ENCODE measurements at regions of chr13 and their contacts with region 1.

Region 1: GRCh38 chr13:52348983-52349780 is 56.8 kb downstream of the THSD1 start:
- DNase-seq: peak; percentile 51
- H3K4me3 ChIP-seq: no peak overlapping the region
- H3K27ac ChIP-seq: no peak overlapping the region
- H3K4me1 ChIP-seq: peaks cover 21% of the 10 kb centered on the region
- H3K27me3 ChIP-seq: no peaks in the 10 kb centered on the region
- CTCF ChIP-seq: no peak
- POLR2A ChIP-seq: no peak

Region 2: DNA sequence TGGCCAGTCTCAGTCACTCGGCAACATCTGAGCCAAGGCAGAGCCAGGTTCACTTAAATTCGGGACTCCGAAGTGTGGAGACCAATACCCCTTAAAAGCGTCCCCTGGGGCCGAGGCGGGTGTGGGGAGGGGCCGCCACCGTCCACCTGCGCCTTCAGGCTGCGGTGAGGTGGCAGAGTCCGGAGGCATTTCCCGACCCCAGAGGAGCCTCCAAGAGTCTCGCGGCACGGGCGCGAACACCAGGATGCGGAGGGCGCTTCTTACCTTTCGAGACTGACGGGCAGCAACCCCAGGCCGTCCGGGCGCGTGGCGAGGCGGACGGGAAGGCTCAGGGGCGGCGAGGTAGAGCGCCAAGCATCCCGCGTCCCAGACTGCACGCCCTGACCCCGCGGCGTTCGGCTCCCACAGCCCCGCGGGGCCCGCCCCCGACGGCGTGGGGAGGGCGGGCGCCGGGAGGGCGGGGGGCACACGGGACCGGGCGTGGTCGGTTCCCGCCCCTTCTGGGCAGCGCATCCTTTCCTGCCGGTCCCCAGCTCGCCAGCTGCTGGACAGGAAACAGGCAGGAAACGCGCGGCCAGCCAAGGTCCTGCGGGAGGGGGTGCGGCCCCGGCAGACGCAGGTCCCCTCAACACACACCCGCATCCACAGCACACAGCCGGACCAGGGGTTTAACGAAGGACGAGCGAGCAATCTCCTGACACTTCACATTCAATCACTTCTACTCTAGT is 56.7 kb after region 1 on chr13 and contains the start of gene THSD1:
- CTCF ChIA-PET with region 1: no interaction called
- POLR2A ChIA-PET with region 1: no interaction called
- dilution Hi-C with region 1: no loop called
- intact Hi-C with region 1: loop called (anchors 2 kb)
- DNase-seq: peak; percentile 71
- H3K4me3 ChIP-seq: peak within 1 kb of the TSS; percentile 71 to 99 (median 74)
- H3K27ac ChIP-seq: peak within 1 kb of the TSS; percentile 81
- H3K4me1 ChIP-seq: peaks cover 21% of the 10 kb centered on the region
- H3K27me3 ChIP-seq: no peaks in the 10 kb centered on the region
- CTCF ChIP-seq: no peak
- POLR2A ChIP-seq: peak; percentile 81
- total RNA-seq, gene THSD1: 25.2 and 25.4 TPM in 2 replicates

Measured in endothelial cell of umbilical vein (primary cell).